Dendritic cell treated with granulocyte-macrophage colony-stimulating factor and Interleukin-4, amounts not matched to agents 40 ng/mL and 50 ng/mL, for 4 days (primary cell): ENCODE measurements at regions of chr6 and their contacts with region 1.

Region 1: DNA sequence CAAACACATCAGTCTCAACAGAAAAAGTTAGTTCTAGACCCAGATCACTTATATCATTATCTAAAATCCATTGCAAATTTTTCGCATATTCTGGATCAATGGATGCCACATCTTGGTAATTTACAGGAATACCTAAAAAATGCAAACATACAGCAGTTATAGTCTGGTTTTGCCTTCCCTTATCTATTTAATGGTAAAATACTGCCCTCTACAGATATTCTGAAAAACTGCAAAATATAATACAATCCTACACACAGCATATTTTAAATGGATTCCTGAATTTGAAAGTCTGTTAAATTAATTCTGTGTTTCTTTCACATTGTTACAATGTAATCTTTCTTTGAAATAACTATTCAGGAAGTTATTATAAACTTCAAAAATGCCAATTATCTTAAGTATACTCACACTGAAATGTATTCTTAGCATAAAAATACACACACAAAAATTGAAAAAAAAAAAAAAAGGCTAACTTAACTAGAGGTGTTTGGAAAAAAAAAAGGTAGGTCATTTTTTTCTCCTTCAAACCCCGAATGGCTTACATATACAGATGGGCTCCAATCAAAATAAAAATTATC is 88.4 kb downstream of the HACE1 start:
- H3K4me3 Mint-ChIP-seq: no peak overlapping the region
- H3K27ac Mint-ChIP-seq: no peak overlapping the region
- H3K4me1 Mint-ChIP-seq: no peaks in the 10 kb centered on the region
- H3K27me3 Mint-ChIP-seq: no peaks in the 10 kb centered on the region

Region 2: GRCh38 chr6:104525677-104526312 is 245.6 kb before region 1 on chr6:
- intact Hi-C with region 1: loop called (anchors 5 kb)
- H3K4me3 Mint-ChIP-seq: no peak overlapping the region
- H3K27ac Mint-ChIP-seq: no peak overlapping the region
- H3K4me1 Mint-ChIP-seq: peaks cover 13% of the 10 kb centered on the region
- H3K27me3 Mint-ChIP-seq: peaks cover 3% of the 10 kb centered on the region

Region 3: GRCh38 chr6:104682722-104683643 is 88.4 kb before region 1 on chr6:
- intact Hi-C with region 1: loop called (anchors 1 kb)
- H3K4me3 Mint-ChIP-seq: no peak overlapping the region
- H3K27ac Mint-ChIP-seq: no peak overlapping the region
- H3K4me1 Mint-ChIP-seq: no peaks in the 10 kb centered on the region
- H3K27me3 Mint-ChIP-seq: no peaks in the 10 kb centered on the region